ENCODE measurements at regions of chr7 and their contacts with region 1.

Region 1: DNA sequence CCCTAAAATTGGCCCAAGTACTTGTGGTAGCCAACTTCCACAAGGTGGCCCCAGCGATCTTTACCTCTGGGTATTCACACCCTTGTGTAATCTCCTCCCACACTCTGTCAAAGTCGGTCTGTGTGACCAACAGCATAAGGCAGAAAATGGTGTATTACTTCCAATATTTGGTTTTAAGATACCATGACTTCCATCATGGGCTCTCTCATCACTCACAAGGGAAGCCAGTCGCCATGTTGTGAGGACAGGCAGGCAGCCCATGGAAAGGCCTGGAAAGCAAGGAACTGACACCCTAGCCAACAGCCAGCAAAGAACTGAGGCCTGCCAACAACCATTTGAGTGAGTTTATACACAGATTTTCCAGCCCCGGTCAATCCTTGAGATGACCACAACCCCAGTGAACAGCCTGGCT is 91.0 kb upstream of the KMT2E start:
- ATAC-seq: peak; percentile 86 to 98 (median 94)
- H3K4me3 ChIP-seq: no peak overlapping the region
- H3K27ac ChIP-seq: no peak overlapping the region
- H3K4me1 ChIP-seq: peaks cover 0 to 3% of the 10 kb centered on the region in 2 donors

Region 2: DNA sequence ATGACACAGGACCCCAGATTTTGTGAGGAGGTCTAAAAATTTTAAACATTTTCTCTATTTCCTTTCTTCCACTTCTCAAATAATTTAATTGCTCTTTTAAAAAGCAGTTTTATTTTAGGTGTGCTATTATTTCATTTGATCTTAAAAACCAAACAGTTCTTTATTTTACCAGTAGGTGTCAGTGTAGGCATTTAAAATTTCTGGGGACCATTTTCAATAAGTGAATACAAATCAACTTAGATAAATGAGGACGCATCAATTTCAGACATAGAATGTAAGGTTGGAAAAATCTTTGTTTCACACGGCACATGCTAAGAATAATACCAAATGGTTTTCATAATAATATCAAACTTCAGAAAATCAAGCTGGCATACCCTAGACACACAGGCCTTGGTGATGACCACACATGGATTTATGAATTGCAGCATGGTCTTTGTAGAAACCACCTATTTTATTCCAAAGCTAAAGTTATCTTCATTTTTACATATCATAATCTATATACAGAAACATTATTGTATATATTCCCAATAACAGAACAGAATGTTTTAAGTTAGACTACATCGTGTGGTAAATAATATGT is 1349.4 kb before region 1 on chr7:
- in situ Hi-C with region 1: loop called in 1 of 9 experiments (anchors 25 kb)
- ATAC-seq: no peak
- H3K4me3 ChIP-seq: no peak overlapping the region
- H3K27ac ChIP-seq: no peak overlapping the region
- H3K4me1 ChIP-seq: no peaks in the 10 kb centered on the region

Region 3: DNA sequence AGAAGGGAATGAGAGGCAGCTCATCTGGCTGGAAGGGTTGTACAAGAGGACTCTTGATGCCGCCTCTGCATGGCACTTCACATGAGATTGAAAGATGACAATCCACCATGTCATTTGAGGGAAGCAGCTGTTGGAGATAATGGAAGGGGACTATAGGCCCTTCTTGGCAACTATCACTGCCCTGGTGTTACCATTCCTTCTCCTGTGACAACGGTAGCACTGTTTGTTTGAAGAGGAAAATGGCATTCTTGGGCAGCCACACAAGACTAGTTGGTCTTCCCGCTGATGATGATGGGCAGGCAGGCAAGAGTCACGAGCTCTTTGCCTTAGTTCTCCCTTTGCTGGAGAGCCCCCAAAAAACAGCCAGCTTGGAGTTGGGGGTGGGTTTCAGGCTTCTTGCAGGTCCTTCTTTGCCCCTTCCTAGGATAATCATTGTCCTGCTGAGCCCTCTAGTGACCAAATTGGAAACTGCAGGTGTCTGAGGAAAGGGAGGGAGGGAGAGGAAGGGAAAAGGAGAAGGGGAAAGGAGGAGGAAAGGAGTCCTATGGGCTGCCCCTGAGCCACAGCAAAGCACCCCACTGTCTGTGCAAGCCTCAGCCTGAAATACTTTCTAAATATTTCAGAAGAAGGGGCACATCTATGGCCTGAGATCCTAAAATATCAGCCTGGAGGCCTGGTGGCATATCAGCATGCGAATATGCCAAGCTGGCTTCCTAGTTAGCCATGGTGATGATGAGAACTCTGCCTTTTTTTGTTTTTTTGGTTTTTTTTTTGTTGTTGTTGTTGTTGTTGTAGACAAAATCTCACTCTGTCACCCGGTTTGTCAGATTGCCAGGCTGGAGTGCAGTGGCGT is 74.7 kb before region 1 on chr7:
- in situ Hi-C with region 1: no loop called
- ATAC-seq: peak; percentile 48 to 85 (median 68)
- H3K4me3 ChIP-seq: no peak overlapping the region
- H3K27ac ChIP-seq: no peak overlapping the region
- H3K4me1 ChIP-seq: peaks cover 0 to 5% of the 10 kb centered on the region in 2 donors

Measured in motor neuron (in vitro differentiated cells).